Activated CD8-positive, alpha-beta T cell treated with anti-CD3 and anti-CD28 coated beads, Interleukin-2, amount 10 ng/mL, durations not matched to agents 7 days and 5 days (primary cell): ENCODE measurements at regions of chr13 and their contacts with region 1.

Region 1: DNA sequence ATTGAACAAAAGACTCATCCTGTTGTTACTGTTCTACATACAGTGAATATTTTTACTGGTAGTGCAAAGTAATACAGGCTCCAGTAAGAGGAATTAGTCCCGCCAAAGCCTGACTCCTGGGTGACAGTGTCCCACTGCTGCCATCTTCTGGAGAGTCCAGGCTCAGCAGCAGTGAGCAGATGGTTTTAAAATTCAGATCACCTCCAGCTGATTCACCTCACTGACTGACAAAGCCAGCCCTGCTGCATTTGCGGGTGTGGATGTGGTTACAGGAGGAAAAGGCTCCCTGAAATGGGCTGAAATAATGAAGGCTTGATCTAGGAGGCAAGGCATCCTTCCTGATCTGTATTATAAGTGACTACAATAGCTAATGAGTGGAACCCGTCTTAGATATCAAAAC is 18.3 kb downstream of the PABPC3 start:
- DNase-seq: peak; percentile 74
- ATAC-seq: peak; percentile 79
- H3K4me3 Mint-ChIP-seq: no peak overlapping the region
- H3K27ac Mint-ChIP-seq: no peak overlapping the region
- H3K4me1 Mint-ChIP-seq: peaks cover 5% of the 10 kb centered on the region
- H3K27me3 Mint-ChIP-seq: peaks cover 19% of the 10 kb centered on the region

Region 2: DNA sequence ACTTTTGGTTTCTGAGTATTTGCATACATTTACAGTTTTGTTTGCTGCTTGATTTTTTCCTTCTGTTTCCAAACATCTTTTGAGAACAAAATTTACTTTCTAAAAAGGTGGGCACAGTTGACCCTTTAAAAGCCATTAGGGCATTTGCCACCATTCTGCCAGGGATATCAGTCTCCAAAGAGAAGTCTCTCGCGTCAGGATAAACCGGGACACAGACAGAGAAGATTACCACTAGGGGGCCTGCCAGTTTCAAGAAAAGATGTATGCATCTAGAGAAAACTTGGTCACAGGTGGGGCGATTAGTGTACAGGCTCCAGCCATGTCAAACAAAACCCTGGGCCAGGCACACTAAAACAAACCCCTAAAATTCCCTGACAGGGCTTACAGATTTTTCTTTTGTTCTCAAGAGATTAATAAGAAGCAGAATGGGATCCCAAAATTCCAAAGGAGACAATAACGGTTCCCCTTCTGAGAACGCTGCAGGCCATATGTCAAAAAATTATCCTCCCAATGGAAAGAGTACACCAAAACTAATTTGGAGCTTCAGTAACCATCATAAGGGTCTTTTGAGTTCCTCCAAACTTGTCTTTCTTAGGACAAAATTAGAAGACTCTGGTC is 29.0 kb before region 1 on chr13:
- CTCF ChIA-PET with region 1: interaction called, 14 read pairs
- POLR2A ChIA-PET with region 1: no interaction called
- DNase-seq: peak; percentile 37
- ATAC-seq: no peak
- H3K4me3 Mint-ChIP-seq: no peak overlapping the region
- H3K27ac Mint-ChIP-seq: no peak overlapping the region
- H3K4me1 Mint-ChIP-seq: no peaks in the 10 kb centered on the region
- H3K27me3 Mint-ChIP-seq: peaks cover 16% of the 10 kb centered on the region

Region 3: DNA sequence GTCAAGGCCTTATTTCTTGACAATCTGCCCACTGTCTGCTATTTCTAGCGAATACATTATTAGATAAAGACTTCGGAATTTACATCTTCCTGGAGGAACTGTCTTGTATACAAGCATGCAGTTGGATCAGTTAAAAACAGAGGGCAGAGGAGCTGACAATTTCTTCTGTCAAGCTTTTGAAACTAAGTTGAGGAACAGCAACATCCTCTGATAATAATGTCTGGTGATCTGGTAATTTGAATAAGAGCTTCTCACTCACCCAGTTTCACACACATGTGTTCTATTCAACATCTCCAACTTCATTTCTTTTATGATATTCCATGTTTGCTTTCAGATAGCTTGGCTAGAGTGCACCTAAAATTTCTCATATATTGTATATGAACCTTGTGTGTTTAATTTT is 122.9 kb after region 1 on chr13:
- CTCF ChIA-PET with region 1: no interaction called
- POLR2A ChIA-PET with region 1: no interaction called
- DNase-seq: no peak
- ATAC-seq: no peak
- H3K4me3 Mint-ChIP-seq: no peak overlapping the region
- H3K27ac Mint-ChIP-seq: no peak overlapping the region
- H3K4me1 Mint-ChIP-seq: no peaks in the 10 kb centered on the region
- H3K27me3 Mint-ChIP-seq: no peaks in the 10 kb centered on the region